ENCODE measurements at regions of chr1 and their contacts with region 1.

Region 1: DNA sequence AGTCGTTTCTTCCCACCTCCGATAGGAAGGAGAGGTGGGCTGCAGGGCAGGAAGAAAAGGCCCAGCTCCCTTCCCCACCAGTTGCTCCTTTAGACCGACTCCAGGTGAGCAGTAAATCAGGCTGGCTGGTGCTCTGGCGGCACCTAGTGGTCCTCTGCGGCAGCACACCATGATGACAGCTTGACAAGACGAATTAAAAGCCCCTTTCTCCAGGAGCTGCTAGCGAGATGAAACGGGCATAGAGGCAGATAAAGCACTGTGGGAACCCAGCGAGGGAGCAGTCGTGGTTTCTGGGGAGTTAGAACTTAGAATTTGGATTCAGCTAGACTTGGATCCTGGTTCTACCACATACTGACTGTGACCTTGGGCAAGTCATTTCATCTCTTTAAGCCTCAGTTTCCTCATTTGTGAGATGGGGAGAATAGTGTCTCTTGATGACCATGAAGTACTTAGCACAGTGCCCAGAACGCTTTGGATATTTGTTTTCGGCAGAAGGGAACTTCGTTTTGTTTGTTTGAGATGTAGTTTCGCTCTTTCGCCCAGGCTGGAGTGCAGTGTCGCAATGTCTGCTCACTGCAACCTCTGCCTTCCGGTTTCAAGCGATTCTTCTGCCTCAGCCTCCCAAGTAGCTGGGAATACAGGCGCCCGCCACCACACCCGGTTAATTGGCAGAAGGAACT is 21.8 kb upstream of the COL9A2 start:
- DNase-seq: peak; percentile 94
- ATAC-seq: peak; percentile 89
- H3K4me3 Mint-ChIP-seq: no peak overlapping the region
- H3K27ac Mint-ChIP-seq: no peak overlapping the region
- H3K4me1 Mint-ChIP-seq: peaks cover 46% of the 10 kb centered on the region
- H3K27me3 Mint-ChIP-seq: peaks cover 2% of the 10 kb centered on the region

Region 2: DNA sequence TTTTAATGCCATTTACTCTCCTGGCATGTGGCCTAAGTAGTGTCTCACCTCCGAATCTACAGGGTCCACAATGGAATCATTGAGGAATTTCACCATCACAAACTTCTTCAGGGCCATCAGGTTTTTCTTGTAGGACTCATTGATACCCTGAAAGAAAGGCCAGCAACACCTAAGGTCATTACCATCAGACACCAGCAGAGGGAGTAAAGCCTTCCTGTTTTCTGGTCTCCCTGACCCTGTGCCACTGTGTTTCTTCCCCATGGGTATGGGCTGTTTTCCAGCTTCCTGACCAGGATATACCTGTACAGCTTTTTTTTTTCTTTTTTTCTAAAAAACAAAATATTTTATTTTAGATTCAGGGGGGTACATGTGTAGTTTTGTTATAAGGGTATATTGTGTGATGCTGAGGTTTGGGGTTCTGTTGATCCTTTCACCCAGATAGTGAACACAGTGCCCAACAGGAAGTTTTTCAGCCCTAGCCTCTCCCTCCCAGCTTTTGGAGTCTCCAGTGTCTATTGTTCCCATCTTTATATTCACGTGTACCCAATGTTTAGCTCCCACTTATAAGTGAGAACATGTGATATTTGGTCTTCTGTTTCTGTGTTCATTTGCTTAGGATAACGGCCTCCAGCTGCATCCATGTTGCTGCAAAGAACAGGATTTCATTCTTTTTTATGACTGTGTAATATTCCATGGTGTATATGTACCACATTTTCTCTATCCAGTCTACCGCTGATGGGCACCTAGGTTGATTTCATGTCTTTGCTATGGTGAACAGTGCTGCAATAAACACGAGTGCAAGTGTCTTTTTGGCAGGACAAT is 260.2 kb before region 1 on chr1:
- CTCF ChIA-PET with region 1: interaction called, 67 read pairs
- DNase-seq: peak; percentile 68
- ATAC-seq: peak; percentile 68
- H3K4me3 Mint-ChIP-seq: no peak overlapping the region
- H3K27ac Mint-ChIP-seq: no peak overlapping the region
- H3K4me1 Mint-ChIP-seq: peaks cover 19% of the 10 kb centered on the region
- H3K27me3 Mint-ChIP-seq: no peaks in the 10 kb centered on the region

Region 3: GRCh38 chr1:40107290-40108262 is 231.3 kb before region 1 on chr1:
- CTCF ChIA-PET with region 1: interaction called, 10 read pairs
- DNase-seq: no peak
- ATAC-seq: no peak
- H3K4me3 Mint-ChIP-seq: no peak overlapping the region
- H3K27ac Mint-ChIP-seq: no peak overlapping the region
- H3K4me1 Mint-ChIP-seq: peaks cover 2% of the 10 kb centered on the region
- H3K27me3 Mint-ChIP-seq: peaks cover 19% of the 10 kb centered on the region

Region 4: GRCh38 chr1:40153073-40153770 is 185.7 kb before region 1 on chr1:
- CTCF ChIA-PET with region 1: interaction called, 216 read pairs
- DNase-seq: peak; percentile 48
- ATAC-seq: peak; percentile 86
- H3K4me3 Mint-ChIP-seq: no peak overlapping the region
- H3K27ac Mint-ChIP-seq: no peak overlapping the region
- H3K4me1 Mint-ChIP-seq: peaks cover 11% of the 10 kb centered on the region
- H3K27me3 Mint-ChIP-seq: peaks cover 4% of the 10 kb centered on the region

Region 5: GRCh38 chr1:40299366-40300248 is 39.3 kb before region 1 on chr1:
- CTCF ChIA-PET with region 1: no interaction called
- DNase-seq: no peak
- ATAC-seq: no peak
- H3K4me3 Mint-ChIP-seq: no peak overlapping the region
- H3K27ac Mint-ChIP-seq: no peak overlapping the region
- H3K4me1 Mint-ChIP-seq: no peaks in the 10 kb centered on the region
- H3K27me3 Mint-ChIP-seq: no peaks in the 10 kb centered on the region

Region 6: GRCh38 chr1:40315239-40315794 is 23.6 kb before region 1 on chr1:
- CTCF ChIA-PET with region 1: interaction called, 106 read pairs
- DNase-seq: peak; percentile 90
- ATAC-seq: peak; percentile 77
- H3K4me3 Mint-ChIP-seq: peak overlapping the region; percentile 74
- H3K27ac Mint-ChIP-seq: peak overlapping the region; percentile 66
- H3K4me1 Mint-ChIP-seq: peaks cover 42% of the 10 kb centered on the region
- H3K27me3 Mint-ChIP-seq: peaks cover 25% of the 10 kb centered on the region

Region 7: DNA sequence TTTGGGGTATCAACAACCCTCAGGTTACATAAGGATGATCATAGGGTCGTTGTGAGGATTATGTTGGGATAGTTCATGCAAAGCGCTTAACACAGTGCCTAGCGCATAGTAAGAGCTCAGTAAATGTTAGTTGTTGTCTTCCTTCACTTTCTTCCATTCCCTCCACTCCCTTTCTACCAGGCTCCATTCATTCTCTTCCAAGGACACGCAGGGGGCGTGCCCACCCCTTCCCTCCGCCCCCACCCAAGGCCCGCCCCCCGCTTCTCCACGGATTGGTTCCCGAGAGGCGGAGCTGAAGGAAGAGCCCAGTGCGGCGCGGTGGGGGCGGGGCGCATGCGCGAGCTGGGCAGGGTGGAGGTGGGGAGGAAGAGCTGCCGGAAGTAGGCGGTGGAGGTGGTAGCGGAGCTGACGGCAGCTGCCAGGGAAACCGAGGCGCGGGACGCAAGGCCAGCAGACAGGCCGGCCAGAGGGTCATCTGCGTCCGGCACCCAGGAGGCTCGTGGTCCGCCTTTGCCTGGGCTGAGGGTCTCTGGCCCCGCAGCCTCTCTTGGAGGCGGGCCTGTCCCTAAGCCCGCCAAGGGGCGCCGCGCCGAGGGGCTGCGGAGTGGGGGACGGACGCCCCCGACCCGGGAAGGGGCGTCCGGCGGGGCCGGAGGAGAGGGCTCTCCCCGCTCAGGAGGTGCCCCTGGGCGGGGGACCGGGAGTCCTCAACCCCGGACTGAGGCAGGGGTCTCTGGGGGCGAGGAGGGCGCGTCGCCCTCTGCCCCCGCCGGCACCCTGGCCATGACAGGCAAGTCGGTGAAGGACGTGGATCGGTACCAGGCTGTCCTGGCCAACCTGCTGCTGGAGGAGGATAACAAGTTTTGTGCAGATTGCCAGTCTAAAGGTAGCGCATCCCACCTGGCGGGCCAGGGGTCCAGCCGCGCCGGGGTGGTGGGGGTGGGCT is 34.7 kb after region 1 on chr1 and contains the start of gene SMAP2:
- CTCF ChIA-PET with region 1: interaction called, 27 read pairs
- DNase-seq: peak; percentile 97
- ATAC-seq: peak; percentile 92
- H3K4me3 Mint-ChIP-seq: peak within 1 kb of the TSS; percentile 98
- H3K27ac Mint-ChIP-seq: peak within 1 kb of the TSS; percentile 98
- H3K4me1 Mint-ChIP-seq: peaks cover 42% of the 10 kb centered on the region
- H3K27me3 Mint-ChIP-seq: no peaks in the 10 kb centered on the region
- total RNA-seq, gene SMAP2: 116 to 145 TPM

Region 8: GRCh38 chr1:40404670-40405462 is 66.0 kb after region 1 on chr1:
- CTCF ChIA-PET with region 1: interaction called, 36 read pairs
- DNase-seq: no peak
- ATAC-seq: peak; percentile 50
- H3K4me3 Mint-ChIP-seq: peak overlapping the region; percentile 4
- H3K27ac Mint-ChIP-seq: peak overlapping the region; percentile 82
- H3K4me1 Mint-ChIP-seq: peaks cover 54% of the 10 kb centered on the region
- H3K27me3 Mint-ChIP-seq: no peaks in the 10 kb centered on the region